ENCODE measurements at regions of chr10 and their contacts with region 1.

Region 1: DNA sequence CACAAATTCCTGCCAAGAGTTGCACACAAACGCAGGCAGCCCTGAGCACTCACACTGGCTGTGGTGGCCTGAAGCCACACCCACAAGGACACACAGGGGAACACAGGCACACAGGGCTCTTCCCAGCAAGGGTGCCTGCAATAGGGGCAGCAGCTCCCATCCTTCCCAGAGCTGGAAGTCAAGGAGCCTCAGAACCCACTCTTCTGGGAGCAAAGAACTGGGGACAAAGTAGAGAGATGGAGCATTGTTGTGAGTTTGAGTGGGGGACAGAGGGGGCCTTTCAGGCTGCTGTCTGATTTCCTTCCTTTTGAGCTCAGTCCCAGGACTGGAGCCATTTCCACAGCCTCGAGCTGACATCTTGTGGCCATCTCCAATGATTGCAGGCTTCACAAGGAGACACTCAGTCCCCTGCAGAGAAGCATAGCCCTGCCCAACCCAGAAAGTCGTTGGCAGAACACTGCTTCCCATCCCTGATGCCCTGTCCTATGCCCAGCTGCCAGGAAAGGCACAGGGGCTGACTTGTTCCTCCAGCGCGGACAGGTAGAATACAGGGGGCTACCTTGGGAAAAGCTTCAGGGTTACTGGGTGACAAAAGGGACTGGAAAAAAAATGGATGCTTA is 34.4 kb upstream of the SLF2 start:
- DNase-seq: peak; percentile 49 to 73 (median 56)
- H3K4me3 ChIP-seq: no peak overlapping the region
- H3K27ac ChIP-seq: no peak overlapping the region
- H3K4me1 ChIP-seq: peaks cover 15% of the 10 kb centered on the region
- H3K27me3 ChIP-seq: no peaks in the 10 kb centered on the region
- CTCF ChIP-seq: peak; percentile 40 to 43 (median 43)
- EP300 ChIP-seq: no peak
- POLR2A ChIP-seq: no peak

Region 2: DNA sequence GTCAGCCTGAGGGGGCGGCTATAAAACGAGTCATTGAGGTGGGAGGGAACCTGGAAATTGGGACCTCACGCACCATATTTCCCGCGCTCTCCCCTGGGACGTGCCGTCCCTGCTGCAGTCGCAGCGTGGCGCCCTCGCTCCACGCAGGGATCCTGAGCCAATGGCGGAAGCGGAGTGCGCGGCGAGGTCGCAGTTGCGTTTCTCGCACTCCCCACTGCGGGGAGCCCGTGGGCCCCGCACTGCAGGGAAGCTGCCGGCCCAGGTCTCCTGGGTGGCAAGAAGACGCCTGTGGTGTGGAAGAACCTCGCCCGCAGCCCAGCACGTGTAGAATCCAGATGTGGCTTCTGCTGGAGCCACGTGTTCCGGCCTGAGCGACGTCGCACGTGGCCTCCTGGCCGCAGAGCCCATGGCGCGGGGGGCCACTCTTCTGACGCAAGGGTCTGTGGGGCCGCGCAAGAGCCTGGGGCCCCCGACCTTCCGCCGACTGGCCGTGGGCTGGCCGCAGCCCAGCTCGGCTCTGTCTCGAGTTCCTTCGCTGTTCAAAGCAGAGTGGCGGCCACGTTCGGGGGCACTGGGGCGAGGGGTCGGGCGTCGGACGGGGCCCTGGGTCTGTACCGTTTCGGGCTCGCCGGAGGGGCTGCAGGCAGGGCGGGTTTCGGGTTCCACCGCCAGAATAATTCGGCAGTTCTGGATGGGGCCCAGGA is 316.2 kb before region 1 on chr10:
- intact Hi-C with region 1: loop called in 2 of 4 experiments (anchors 5 to 10 kb)
- DNase-seq: peak; percentile 49 to 79 (median 58)
- H3K4me3 ChIP-seq: no peak overlapping the region
- H3K27ac ChIP-seq: no peak overlapping the region
- H3K4me1 ChIP-seq: peaks cover 10% of the 10 kb centered on the region
- H3K27me3 ChIP-seq: no peaks in the 10 kb centered on the region
- CTCF ChIP-seq: peak in 2 of 3 donors; percentile 52 to 75
- EP300 ChIP-seq: no peak
- POLR2A ChIP-seq: no peak

Region 3: GRCh38 chr10:100847440-100847839 is 31.0 kb before region 1 on chr10:
- intact Hi-C with region 1: no loop called
- DNase-seq: no peak
- H3K4me3 ChIP-seq: no peak overlapping the region
- H3K27ac ChIP-seq: no peak overlapping the region
- H3K4me1 ChIP-seq: no peaks in the 10 kb centered on the region
- H3K27me3 ChIP-seq: no peaks in the 10 kb centered on the region
- CTCF ChIP-seq: no peak
- EP300 ChIP-seq: no peak
- POLR2A ChIP-seq: no peak

Region 4: GRCh38 chr10:100912605-100913469 is 34.4 kb after region 1 on chr10 and contains the start of gene SLF2:
- intact Hi-C with region 1: loop called in 1 of 4 experiments (anchors 2 kb)
- DNase-seq: peak; percentile 97 to 99 (median 98)
- H3K4me3 ChIP-seq: peak within 1 kb of the TSS; percentile 97
- H3K27ac ChIP-seq: peak within 1 kb of the TSS; percentile 63 to 90
- H3K4me1 ChIP-seq: peaks cover 10% of the 10 kb centered on the region
- H3K27me3 ChIP-seq: no peaks in the 10 kb centered on the region
- CTCF ChIP-seq: peak in 1 of 3 donors; percentile 4
- EP300 ChIP-seq: peak; percentile 95
- POLR2A ChIP-seq: peak; percentile 79
- total RNA-seq, gene SLF2: 27.0 to 81.9 (median 42.1) TPM

Region 5: DNA sequence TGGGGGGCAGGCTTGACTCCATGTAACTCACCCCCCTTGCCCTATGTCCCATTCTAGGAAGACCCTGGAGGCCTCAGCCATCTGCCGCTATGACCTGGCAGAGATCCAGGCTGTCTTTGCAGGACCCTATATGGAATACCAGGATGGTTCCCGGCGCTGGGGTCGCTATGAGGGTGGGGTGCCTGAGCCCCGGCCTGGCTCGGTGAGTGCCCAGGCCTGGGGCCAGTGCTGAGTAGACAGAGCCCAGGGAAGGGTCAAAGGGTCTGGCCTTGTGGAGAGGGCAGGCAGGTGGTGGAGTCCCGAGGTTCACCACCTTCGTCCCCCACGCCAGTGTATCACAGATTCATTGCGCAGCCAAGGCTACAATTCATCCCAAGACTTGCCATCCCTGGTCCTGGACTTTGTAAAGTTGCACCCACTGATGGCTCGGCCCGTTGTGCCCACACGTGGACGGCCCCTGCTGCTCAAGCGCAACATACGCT is 101.4 kb after region 1 on chr10:
- intact Hi-C with region 1: no loop called
- DNase-seq: peak in 1 of 5 donors; percentile 37
- H3K4me3 ChIP-seq: no peak overlapping the region
- H3K27ac ChIP-seq: no peak overlapping the region
- H3K4me1 ChIP-seq: no peaks in the 10 kb centered on the region
- H3K27me3 ChIP-seq: no peaks in the 10 kb centered on the region
- CTCF ChIP-seq: no peak
- EP300 ChIP-seq: no peak
- POLR2A ChIP-seq: no peak